Caco-2 (cell line): ENCODE measurements at regions of chr1 and their contacts with region 1.

Region 1: GRCh38 chr1:244864253-244865027 is at the start of gene HNRNPU:
- DNase-seq: peak; percentile 95 to 97
- H3K4me3 ChIP-seq: peak within 1 kb of the TSS; percentile 97
- H3K4me3 Mint-ChIP-seq: peak within 1 kb of the TSS; percentile 94
- H3K27ac Mint-ChIP-seq: peak within 1 kb of the TSS; percentile 83
- H3K4me1 ChIP-seq: peaks cover 7% of the 10 kb centered on the region; the same call in 1 of the 2 replicates
- H3K4me1 Mint-ChIP-seq: peaks cover 22% of the 10 kb centered on the region
- H3K27me3 ChIP-seq: no peaks in the 10 kb centered on the region
- H3K27me3 Mint-ChIP-seq: no peaks in the 10 kb centered on the region
- CTCF ChIP-seq: peak; percentile 28 to 30
- total RNA-seq, gene HNRNPU: 478 and 482 TPM in 2 replicates

Region 2: GRCh38 chr1:244642526-244642925 is 221.9 kb before region 1 on chr1:
- CTCF ChIA-PET with region 1: no interaction called
- POLR2A ChIA-PET with region 1: no interaction called
- intact Hi-C with region 1: no loop called
- DNase-seq: no peak
- H3K4me3 ChIP-seq: no peak overlapping the region
- H3K4me3 Mint-ChIP-seq: no peak overlapping the region
- H3K27ac Mint-ChIP-seq: no peak overlapping the region
- H3K4me1 ChIP-seq: no peaks in the 10 kb centered on the region
- H3K4me1 Mint-ChIP-seq: no peaks in the 10 kb centered on the region
- H3K27me3 ChIP-seq: no peaks in the 10 kb centered on the region
- H3K27me3 Mint-ChIP-seq: no peaks in the 10 kb centered on the region
- CTCF ChIP-seq: no peak

Region 3: GRCh38 chr1:244821134-244821533 is 43.3 kb before region 1 on chr1:
- CTCF ChIA-PET with region 1: no interaction called
- POLR2A ChIA-PET with region 1: no interaction called
- intact Hi-C with region 1: loop called (anchors 1 kb)
- DNase-seq: peak; percentile 70 to 82
- H3K4me3 ChIP-seq: no peak overlapping the region
- H3K4me3 Mint-ChIP-seq: peak overlapping the region; percentile 39
- H3K27ac Mint-ChIP-seq: peak overlapping the region; percentile 90
- H3K4me1 ChIP-seq: peaks cover 50% of the 10 kb centered on the region
- H3K4me1 Mint-ChIP-seq: peaks cover 15% of the 10 kb centered on the region
- H3K27me3 ChIP-seq: no peaks in the 10 kb centered on the region
- H3K27me3 Mint-ChIP-seq: no peaks in the 10 kb centered on the region
- CTCF ChIP-seq: no peak

Region 4: DNA sequence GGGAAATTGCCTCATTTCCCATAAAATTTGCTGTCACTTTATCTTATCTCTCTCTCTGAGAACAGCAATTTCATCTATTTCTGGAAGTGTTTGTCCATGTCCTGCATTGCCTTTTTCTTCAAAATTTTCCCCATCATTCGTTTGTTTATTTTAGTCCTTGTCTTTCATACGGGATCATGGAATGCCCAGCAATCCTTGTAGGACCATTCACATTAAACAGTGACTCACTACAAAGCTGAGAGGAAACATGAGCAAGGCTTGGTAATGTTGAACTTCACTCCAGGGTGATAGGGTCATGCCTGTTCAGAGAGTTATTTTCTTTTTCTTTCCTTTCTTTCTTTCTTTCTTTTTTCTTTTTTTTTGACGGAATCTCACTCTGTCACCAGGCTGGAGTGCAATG is 32.1 kb after region 1 on chr1:
- CTCF ChIA-PET with region 1: no interaction called
- POLR2A ChIA-PET with region 1: no interaction called
- intact Hi-C with region 1: loop called (anchors 5 kb)
- DNase-seq: no peak
- H3K4me3 ChIP-seq: no peak overlapping the region
- H3K4me3 Mint-ChIP-seq: no peak overlapping the region
- H3K27ac Mint-ChIP-seq: no peak overlapping the region
- H3K4me1 ChIP-seq: peaks cover 3% of the 10 kb centered on the region
- H3K4me1 Mint-ChIP-seq: peaks cover 18% of the 10 kb centered on the region
- H3K27me3 ChIP-seq: no peaks in the 10 kb centered on the region
- H3K27me3 Mint-ChIP-seq: no peaks in the 10 kb centered on the region
- CTCF ChIP-seq: no peak

Region 5: DNA sequence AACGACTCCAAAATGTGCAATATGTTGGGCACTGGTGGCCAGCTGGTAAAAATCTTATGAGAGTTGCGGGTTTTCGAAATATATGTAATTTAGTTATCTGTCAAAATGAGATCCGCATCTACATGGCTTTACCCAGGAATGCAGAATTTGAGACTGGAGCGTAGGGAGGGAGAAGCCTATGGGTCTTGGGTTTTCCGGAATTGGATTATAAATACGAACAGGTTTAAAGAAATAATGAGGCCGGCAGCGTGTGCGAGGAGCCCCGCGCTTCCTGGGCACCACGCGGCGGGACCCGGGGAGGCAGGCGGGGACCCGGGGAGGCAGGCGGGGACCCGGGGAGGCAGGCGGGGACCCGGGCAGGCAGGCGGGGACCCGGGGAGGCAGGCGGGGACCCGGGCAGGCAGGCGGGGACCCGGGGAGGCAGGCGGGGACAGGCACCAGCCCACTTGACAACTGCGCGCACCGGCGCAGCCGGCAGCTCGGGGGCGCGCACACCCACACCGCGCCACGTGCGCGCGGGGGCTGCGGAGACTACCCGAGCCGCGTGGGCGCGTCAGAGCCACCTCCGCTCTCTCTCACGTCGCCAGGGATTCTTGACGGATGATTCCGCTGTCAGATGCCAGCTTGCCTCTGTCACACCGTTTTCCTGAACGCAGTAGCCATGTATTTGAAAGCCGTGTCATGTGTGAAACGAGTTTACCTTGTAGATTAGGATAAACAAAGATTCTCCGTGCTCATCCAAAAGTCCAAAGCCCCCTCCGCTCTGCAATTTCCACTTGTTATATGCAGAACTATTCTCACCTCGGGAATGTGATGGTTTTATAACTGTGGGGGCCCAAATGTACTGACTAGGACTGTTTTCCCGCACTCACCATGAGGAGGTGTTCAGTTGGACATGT is 54.2 kb after region 1 on chr1:
- CTCF ChIA-PET with region 1: no interaction called
- POLR2A ChIA-PET with region 1: no interaction called
- intact Hi-C with region 1: loop called (anchors 2 kb)
- DNase-seq: peak; percentile 45 to 64
- H3K4me3 ChIP-seq: peak overlapping the region; percentile 82
- H3K4me3 Mint-ChIP-seq: peak overlapping the region; percentile 84
- H3K27ac Mint-ChIP-seq: peak overlapping the region; percentile 33
- H3K4me1 ChIP-seq: peaks cover 4% of the 10 kb centered on the region; the same call in 1 of the 2 replicates
- H3K4me1 Mint-ChIP-seq: peaks cover 6% of the 10 kb centered on the region
- H3K27me3 ChIP-seq: no peaks in the 10 kb centered on the region
- H3K27me3 Mint-ChIP-seq: no peaks in the 10 kb centered on the region
- CTCF ChIP-seq: no peak

Region 6: DNA sequence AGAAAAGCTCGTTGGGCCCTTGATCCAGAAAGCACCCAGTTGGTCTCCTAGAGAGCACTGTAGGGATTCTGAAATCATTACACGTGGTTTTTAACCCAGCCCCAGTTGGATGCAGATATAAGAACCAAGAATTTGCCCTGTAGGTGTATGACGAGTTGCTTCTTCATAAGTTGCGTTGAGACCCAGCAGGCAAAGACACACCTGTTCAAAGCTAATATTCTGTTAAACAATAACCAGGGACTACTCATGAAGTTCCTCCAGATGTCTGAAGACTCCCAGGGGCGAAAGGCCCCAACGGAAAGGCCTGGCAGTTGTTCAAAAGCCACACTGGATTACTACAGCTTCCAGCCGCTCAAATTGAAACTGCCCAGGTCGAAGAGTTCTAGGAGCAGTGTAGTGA is 88.5 kb after region 1 on chr1:
- CTCF ChIA-PET with region 1: no interaction called
- POLR2A ChIA-PET with region 1: interaction called, 10 read pairs
- intact Hi-C with region 1: no loop called
- DNase-seq: peak; percentile 78 to 84
- H3K4me3 ChIP-seq: no peak overlapping the region
- H3K4me3 Mint-ChIP-seq: peak overlapping the region; percentile 34
- H3K27ac Mint-ChIP-seq: peak overlapping the region; percentile 55
- H3K4me1 ChIP-seq: peaks cover 21% of the 10 kb centered on the region
- H3K4me1 Mint-ChIP-seq: peaks cover 11% of the 10 kb centered on the region
- H3K27me3 ChIP-seq: no peaks in the 10 kb centered on the region
- H3K27me3 Mint-ChIP-seq: no peaks in the 10 kb centered on the region
- CTCF ChIP-seq: no peak

Region 7: DNA sequence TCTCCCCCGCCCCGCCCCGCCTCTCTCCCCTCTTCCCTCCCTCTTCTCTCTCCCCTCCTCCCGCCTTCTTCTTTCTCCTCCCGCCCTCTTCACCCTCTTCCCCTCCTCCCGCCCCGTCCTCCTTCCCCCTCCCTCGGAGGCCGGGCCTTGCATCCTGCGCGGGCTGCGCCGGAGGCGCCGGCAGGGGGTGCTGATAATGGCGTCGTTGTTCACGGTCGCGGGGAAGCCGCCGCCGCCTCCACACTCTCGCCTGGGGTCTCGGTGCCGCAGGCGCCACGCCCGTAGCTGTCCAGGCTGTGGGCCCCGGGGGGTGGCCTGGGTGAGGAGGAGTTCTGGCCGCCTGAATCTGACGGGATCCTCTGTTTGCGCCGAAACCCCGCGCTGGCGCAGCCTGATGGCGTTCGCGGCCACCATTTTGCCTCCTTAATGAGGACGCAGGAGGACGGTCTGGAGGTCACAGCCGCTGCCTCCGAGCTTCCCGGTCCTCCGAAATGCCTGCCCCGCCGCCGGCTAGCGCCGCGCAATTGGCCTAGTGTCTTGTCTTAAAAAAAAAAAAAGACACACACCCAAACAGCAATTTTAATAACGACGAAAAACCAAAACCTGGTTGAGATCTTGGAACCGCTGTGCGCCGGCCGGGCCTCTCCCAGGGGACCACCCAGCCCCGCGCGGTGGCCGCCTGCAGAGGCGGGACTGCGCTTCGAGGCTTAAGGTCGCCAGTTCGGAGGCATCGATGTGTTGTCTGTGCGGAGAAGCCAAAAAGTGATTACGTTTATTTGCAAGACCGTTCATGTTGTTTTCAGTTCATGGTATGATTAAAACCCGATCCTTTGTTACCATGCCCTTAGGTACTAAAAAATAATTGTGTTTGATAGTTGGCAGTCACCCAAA is 106.5 kb after region 1 on chr1:
- CTCF ChIA-PET with region 1: interaction called, 3 read pairs
- POLR2A ChIA-PET with region 1: interaction called, 19 read pairs
- intact Hi-C with region 1: loop called (anchors 1 kb)
- DNase-seq: peak; percentile 97
- H3K4me3 ChIP-seq: peak overlapping the region; percentile 82
- H3K4me3 Mint-ChIP-seq: peak overlapping the region; percentile 91
- H3K27ac Mint-ChIP-seq: peak overlapping the region; percentile 99
- H3K4me1 ChIP-seq: peaks cover 16% of the 10 kb centered on the region
- H3K4me1 Mint-ChIP-seq: peaks cover 20% of the 10 kb centered on the region
- H3K27me3 ChIP-seq: no peaks in the 10 kb centered on the region
- H3K27me3 Mint-ChIP-seq: no peaks in the 10 kb centered on the region
- CTCF ChIP-seq: peak; percentile 54 to 79

Region 8: DNA sequence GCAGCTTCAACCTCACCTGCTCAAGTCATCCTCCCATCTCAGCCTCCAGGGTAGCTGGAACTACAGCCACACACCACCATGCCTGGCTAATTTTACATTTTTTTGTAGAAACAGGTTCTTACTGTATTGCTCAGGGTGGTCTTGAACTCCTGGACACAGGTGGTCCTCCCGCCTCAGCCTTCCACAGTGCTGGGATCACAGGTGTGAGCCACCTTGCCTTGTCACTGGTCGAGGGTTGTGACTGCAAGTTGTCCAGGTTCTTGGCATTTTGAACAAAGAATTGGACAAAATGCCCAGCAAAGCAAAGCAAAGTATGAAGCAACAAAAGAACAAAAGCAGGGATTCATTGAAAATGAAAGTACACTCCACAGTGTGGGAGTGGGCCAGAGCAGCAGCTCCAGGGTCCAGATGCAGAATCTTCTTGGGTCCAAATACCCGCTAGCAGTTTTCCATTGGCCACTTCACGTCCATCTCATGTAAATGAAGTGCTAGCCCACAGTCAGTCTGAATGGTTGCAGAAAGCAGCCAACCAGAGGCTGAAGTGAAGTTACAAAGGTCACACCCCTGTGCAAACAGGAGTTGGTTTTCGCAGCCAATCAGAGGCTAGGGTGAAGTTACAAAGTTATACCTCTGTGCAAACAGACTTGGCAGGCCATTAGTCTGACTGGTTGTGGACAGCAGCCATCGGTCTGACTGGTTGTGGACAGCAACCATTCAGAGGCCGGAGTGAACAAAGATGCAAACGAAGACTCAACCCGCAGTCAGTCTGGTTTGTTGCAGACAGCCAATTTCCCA is 180.8 kb after region 1 on chr1:
- CTCF ChIA-PET with region 1: interaction called, 7 read pairs
- POLR2A ChIA-PET with region 1: interaction called, 12 read pairs
- intact Hi-C with region 1: loop called (anchors 1 kb)
- DNase-seq: peak; percentile 88 to 94
- H3K4me3 ChIP-seq: peak overlapping the region; percentile 13; the same call in 1 of the 2 replicates
- H3K4me3 Mint-ChIP-seq: peak overlapping the region; percentile 47
- H3K27ac Mint-ChIP-seq: peak overlapping the region; percentile 39
- H3K4me1 ChIP-seq: peaks cover 54% of the 10 kb centered on the region
- H3K4me1 Mint-ChIP-seq: peaks cover 37% of the 10 kb centered on the region
- H3K27me3 ChIP-seq: no peaks in the 10 kb centered on the region
- H3K27me3 Mint-ChIP-seq: no peaks in the 10 kb centered on the region
- CTCF ChIP-seq: no peak